Aorta (tissue), 5 donors: ENCODE measurements at regions of chr3 and their contacts with region 1.

Region 1: GRCh38 chr3:138594150-138594934 is at the start of gene CEP70:
- DNase-seq: peak; percentile 96 to 97
- ATAC-seq: peak; percentile 99
- H3K4me3 ChIP-seq: peak within 1 kb of the TSS; percentile 51 to 58
- H3K27ac ChIP-seq: peak within 1 kb of the TSS; percentile 43 to 80
- H3K4me1 ChIP-seq: no peaks in the 10 kb centered on the region
- H3K27me3 ChIP-seq: no peaks in the 10 kb centered on the region
- total RNA-seq, gene CEP70: 27.9 to 49.5 TPM

Region 2: DNA sequence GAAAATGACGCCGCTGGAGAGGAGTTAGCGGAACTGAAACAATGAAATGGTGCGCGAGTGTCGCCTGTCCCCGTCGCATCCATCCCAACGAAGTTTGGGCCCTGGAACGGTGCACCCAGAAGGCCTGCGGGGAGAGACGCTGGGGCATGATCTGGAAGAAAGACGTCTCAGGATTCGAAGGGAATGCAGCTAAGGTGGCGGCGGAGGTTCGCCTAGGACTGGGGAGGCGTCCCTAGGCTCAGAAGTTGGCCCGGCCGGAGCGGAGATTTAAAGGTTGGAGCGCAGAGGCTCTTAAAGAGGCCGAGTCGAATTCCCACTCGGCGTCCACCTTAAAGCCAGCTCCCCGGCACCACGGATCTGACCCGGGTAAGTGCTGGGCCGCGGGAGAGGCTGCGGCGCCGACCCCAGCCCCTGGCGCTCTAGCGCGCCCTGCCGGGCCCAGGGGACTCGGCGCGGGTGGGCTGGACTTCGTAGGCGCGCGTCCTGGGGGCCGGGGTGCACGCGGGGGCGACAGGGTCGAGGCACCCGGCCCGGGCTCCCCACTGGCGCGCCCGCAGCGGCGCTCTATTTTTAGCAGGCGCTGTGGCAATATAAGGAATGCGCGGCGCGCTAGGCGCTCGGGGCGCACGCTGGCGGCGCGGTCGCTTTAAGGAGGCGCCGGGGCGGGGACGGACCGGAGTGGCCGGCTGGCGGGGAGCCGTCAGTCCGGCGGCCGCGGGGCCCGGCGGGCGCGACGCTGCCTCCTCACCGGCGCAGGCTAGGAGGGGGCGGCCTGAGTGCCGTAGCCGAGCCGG is 246.2 kb before region 1 on chr3 and contains the start of gene MRAS:
- intact Hi-C with region 1: loop called in 1 of 2 experiments (anchors 10 kb)
- DNase-seq: peak; percentile 87 to 94
- ATAC-seq: peak; percentile 87
- H3K4me3 ChIP-seq: peak within 1 kb of the TSS; percentile 78 to 93
- H3K27ac ChIP-seq: peak within 1 kb of the TSS; percentile 87 to 92
- H3K4me1 ChIP-seq: no peaks in the 10 kb centered on the region
- H3K27me3 ChIP-seq: no peaks in the 10 kb centered on the region
- total RNA-seq, gene MRAS: 46.3 to 68.1 TPM

Region 3: DNA sequence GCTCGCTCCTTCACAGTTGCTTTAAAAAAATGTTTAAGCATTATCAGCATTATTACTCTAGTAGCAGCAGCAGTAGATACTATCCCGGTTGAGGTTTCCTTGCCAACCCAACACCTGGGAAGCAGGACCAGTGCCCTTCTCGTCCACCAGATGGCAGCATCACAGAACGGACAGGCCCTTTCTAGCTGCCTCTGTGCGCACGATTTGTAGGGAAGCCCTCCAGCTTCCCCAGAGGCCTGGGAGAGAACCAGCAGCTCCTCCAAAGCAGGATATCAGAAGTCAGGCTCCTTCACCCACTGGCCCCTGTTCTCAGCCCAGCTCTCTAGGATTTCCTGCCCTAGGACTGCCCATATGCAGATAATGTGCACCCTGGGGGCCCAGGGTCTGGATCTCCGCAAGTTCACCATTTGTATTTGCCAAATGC is 176.8 kb before region 1 on chr3:
- intact Hi-C with region 1: loop called in 1 of 2 experiments (anchors 10 kb)
- DNase-seq: peak; percentile 79 to 88
- ATAC-seq: peak; percentile 84
- H3K4me3 ChIP-seq: no peak overlapping the region
- H3K27ac ChIP-seq: no peak overlapping the region
- H3K4me1 ChIP-seq: no peaks in the 10 kb centered on the region
- H3K27me3 ChIP-seq: no peaks in the 10 kb centered on the region

Region 4: DNA sequence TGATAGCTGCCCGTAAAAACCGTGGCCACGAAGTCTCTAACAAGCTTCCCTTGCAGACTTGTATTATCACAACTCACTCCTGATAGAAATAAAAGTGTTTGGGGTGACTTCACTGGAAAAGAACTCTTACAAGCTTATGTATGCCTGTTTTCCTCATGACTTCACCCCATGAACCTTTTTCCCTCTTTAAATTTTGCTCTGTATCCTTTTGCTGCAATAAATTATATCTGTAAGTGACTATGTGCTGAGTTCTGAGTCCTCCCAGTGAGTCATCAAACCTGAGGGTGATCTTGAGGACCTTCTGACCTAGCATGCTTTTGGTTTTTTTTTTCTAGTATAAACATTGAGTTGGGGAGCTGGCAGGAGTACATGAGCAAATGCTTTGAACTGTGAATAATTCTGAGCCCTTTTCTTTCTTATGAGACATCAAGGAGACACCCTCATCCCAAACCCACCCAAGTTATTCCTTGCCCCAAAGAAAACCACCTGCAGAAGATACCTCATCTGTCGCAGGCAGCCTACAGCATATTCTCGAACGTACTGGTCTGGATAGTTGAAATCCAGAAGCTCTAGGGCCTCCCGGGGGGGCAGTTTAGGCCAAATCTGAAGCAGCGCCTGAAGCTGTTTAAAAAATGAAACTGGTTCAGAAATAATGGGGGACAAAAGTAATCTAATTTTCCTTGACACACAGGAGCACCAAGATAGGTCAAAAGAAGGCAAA is 100.1 kb after region 1 on chr3:
- intact Hi-C with region 1: loop called in 1 of 2 experiments (anchors 10 kb)
- DNase-seq: no peak
- ATAC-seq: no peak
- H3K4me3 ChIP-seq: no peak overlapping the region
- H3K27ac ChIP-seq: no peak overlapping the region
- H3K4me1 ChIP-seq: peaks cover 0 to 3% of the 10 kb centered on the region in 2 donors
- H3K27me3 ChIP-seq: no peaks in the 10 kb centered on the region

Region 5: DNA sequence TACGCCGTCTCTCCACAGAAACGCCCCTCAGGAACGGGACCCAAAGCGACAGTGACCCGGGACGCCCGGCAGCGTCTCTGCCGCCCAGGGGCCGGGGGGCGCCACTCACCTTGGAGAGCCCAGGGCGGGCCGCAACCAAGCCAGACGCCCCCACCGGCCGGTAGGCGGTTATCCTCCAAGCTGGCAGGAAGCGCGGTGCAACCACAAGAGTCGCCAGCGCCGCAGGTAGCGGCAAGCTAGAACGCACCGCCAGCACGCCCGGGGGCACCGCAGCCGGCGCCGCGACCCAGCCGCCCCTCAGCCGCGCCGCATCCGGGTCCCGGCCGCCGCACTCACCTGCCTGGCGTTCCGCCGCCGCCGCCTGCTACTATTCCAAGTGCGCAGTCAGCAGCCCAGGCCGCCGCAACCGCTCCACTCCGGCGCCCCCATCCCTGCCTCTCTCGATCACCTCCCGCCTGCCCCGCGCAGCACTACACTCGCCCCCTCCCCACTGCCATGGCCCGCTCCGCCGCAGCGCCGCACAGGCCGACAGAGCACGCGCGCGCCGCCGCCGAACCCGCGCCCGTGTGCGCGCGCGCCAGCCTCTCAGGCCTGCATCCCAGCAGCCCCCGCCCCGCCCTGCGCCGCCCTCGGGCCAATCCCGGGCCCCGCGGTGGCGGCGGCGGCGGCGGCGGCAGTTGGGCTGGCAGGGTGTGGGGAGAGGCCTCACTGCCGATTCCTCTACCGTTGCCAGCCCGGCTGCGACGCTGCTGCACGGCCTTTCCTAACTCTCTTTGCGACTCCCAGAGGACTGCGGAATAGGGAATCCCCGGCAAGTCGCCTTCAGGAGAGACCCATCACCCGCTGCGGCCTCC is 240.2 kb after region 1 on chr3 and contains the start of gene PIK3CB:
- intact Hi-C with region 1: loop called in 1 of 2 experiments (anchors 5 kb)
- DNase-seq: peak; percentile 94 to 97
- ATAC-seq: peak; percentile 99
- H3K4me3 ChIP-seq: peak within 1 kb of the TSS; percentile 75 to 86
- H3K27ac ChIP-seq: peak within 1 kb of the TSS; percentile 96 to 97
- H3K4me1 ChIP-seq: no peaks in the 10 kb centered on the region
- H3K27me3 ChIP-seq: no peaks in the 10 kb centered on the region
- total RNA-seq, gene PIK3CB: 27.2 to 29.8 TPM

Region 6: DNA sequence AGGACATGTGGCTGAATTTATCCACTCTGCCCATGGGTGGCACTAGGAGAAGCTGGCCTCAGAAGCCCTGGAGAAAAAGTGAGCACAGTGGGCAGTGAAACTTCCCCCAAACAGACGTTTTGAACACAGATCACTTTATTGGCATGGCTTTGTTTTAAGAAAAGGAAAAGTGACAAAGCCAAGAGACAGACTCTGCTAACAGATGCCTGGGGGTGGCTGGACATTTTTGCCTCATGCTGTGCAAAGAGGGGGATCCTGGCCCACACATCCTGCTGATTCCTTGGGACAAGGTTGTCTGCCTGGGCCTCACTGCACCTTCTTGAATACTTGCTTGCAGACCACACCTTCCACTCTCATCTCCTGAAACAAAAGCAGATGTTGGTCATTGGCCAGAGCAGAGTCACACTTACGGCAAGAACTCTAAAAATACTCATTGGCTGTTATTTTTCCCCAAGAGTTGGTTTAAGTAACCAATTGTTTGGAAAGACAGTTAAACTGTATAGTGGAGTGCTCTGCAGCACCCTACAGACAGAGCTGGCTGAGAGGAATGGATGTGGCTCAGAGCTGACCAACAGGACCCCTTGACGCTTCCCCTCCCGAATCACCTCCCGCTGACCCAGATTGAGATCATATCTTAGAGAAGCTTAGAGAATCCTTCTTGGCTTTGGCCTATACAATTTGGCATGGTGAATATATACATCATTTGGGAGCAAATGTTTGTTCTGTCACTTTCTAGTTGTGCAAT is 923.2 kb after region 1 on chr3:
- intact Hi-C with region 1: no loop called
- DNase-seq: no peak
- ATAC-seq: no peak
- H3K4me3 ChIP-seq: no peak overlapping the region
- H3K27ac ChIP-seq: no peak overlapping the region
- H3K4me1 ChIP-seq: no peaks in the 10 kb centered on the region
- H3K27me3 ChIP-seq: no peaks in the 10 kb centered on the region